GM12878 (cell line): ENCODE measurements at regions of chr11 and their contacts with region 1.

Region 1: GRCh38 chr11:88535916-88536547 is 198.5 kb upstream of the CTSC start:
- DNase-seq: no peak
- ATAC-seq: peak; percentile 99
- H3K4me3 ChIP-seq: no peak overlapping the region
- H3K27ac ChIP-seq: no peak overlapping the region
- H3K4me1 ChIP-seq: no peaks in the 10 kb centered on the region
- H3K27me3 ChIP-seq: no peaks in the 10 kb centered on the region
- CTCF ChIP-seq: no peak
- EP300 ChIP-seq: peak in 1 of 2 experiments; percentile 36; a peak in 1 of 4 replicates
- POLR2A ChIP-seq: no peak
- RAD21 ChIP-seq: no peak

Region 2: GRCh38 chr11:87819151-87819550 is 716.9 kb before region 1 on chr11:
- CTCF ChIA-PET with region 1: no interaction called
- POLR2A ChIA-PET with region 1: no interaction called
- RAD21 ChIA-PET with region 1: no interaction called
- SMC1A ChIA-PET with region 1: no interaction called
- in situ Hi-C with region 1: no loop called
- intact Hi-C with region 1: no loop called
- DNase-seq: no peak
- ATAC-seq: no peak
- H3K4me3 ChIP-seq: no peak overlapping the region
- H3K27ac ChIP-seq: no peak overlapping the region
- H3K4me1 ChIP-seq: no peaks in the 10 kb centered on the region
- H3K27me3 ChIP-seq: no peaks in the 10 kb centered on the region; a peak in 1 of 4 replicates
- CTCF ChIP-seq: no peak
- EP300 ChIP-seq: no peak
- POLR2A ChIP-seq: no peak
- RAD21 ChIP-seq: no peak

Region 3: DNA sequence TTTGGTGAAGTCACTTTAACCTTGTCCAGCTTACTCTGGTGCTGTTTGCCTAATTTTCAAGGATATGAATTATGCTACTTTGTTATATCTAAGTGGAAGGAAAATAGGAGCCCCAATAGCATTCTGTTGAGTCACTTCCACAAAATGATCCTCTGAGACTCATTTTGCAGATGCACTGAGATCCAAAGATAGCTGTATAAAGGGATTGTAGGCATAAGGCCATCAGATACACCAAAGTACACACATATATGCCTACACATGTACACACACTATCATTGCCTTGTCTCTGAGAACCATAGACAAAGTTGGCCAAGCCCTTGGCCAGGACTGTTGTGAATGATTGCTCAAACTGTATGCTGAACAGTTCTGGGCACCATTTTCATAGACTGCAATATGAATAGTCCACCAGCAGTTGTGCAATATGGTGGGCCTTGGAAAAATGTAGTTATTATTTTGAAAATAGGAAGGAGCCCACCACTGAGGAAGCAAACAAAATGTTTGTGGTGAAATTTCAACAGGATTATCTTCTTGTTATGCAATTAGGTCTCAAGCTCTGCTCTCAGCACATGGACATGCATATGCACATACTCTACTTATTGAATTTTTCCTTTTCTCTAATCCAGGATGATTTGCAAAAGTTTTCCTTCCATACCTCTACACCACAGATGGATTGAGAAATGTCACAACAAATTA is 12.5 kb before region 1 on chr11:
- CTCF ChIA-PET with region 1: interaction called, 3 read pairs
- POLR2A ChIA-PET with region 1: no interaction called
- RAD21 ChIA-PET with region 1: no interaction called
- SMC1A ChIA-PET with region 1: interaction called, 11 read pairs
- in situ Hi-C with region 1: no loop called
- intact Hi-C with region 1: no loop called
- DNase-seq: no peak
- ATAC-seq: no peak
- H3K4me3 ChIP-seq: no peak overlapping the region
- H3K27ac ChIP-seq: no peak overlapping the region
- H3K4me1 ChIP-seq: no peaks in the 10 kb centered on the region
- H3K27me3 ChIP-seq: no peaks in the 10 kb centered on the region
- CTCF ChIP-seq: no peak
- EP300 ChIP-seq: no peak
- POLR2A ChIP-seq: no peak
- RAD21 ChIP-seq: no peak